H1 (cell line): ENCODE measurements at regions of chr3 and their contacts with region 1.

Region 1: DNA sequence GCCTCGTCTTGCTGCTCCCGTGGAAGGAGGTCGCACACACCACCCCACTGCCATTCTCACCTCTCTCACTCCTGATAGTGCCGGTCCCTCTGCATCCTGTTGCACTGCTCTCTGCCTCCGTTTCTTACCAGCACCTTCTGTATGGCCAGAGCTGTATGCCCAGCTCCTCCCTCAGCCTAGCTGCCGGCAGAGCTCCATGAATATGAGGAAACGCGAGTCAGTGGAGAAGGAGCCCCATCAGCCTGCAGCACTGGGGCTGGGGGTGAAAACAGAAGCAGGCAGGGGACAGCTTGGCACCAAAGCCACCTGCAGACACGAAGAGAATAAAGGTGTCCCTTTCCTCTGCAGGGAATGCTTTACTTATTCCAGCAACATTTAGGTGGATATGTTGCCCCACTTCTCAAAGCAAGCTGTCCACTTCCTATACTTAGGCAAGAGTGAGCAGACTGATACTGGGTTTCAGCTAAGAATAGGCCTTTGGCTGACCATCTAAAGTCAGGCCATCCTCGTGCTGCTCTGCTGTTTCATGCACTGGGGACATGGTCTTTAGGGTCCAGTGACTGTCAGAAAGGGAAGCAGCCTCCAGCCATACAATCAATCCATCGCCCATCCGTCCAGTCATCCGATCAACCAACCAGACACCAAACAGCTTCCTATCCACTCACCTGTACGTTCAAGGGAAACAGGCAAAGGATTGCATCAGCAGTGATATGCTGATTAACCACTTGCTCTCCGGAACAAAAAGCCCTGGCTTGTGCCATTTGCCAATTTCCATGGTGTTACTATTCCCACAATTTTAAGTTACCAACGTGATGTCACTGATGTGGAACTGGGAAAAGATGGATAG is 222.7 kb downstream of the XXYLT1 start:
- DNase-seq: no peak
- H3K4me3 ChIP-seq: no peak overlapping the region
- H3K27ac ChIP-seq: no peak overlapping the region
- H3K4me1 ChIP-seq: peaks cover 0 to 5% (median 2%) of the 10 kb centered on the region in 4 experiments; a peak in 3 of 7 replicates
- H3K27me3 ChIP-seq: no peaks in the 10 kb centered on the region
- CTCF ChIP-seq: no peak
- EP300 ChIP-seq: no peak
- POLR2A ChIP-seq: no peak
- RAD21 ChIP-seq: no peak

Region 2: DNA sequence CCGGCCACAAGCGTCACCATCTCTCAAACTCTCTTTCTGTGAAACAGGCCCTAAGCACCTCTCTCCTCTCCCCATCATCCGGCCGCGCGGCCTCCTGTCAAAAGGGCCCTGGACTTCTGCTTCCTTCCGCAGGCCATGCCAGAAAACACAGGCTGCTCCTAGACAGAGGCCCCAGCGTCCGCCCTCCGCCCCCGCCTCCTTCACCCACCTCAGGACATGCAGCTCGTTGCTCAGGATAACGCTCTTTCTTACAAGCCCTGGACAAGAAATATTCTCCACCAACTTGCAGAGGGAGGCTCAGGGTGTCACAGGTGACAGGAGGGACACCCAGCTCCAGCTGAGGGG is 10.7 kb after region 1 on chr3:
- CTCF ChIA-PET with region 1: interaction called, 13 read pairs
- POLR2A ChIA-PET with region 1: interaction called, 5 read pairs
- DNase-seq: no peak
- H3K4me3 ChIP-seq: no peak overlapping the region
- H3K27ac ChIP-seq: no peak overlapping the region
- H3K4me1 ChIP-seq: peaks cover 0 to 5% (median 0%) of the 10 kb centered on the region in 4 experiments; a peak in 3 of 7 replicates
- H3K27me3 ChIP-seq: no peaks in the 10 kb centered on the region
- CTCF ChIP-seq: no peak
- EP300 ChIP-seq: no peak
- POLR2A ChIP-seq: no peak
- RAD21 ChIP-seq: no peak